IMR-90 (cell line): ENCODE measurements at regions of chr3 and their contacts with region 1.

Region 1: GRCh38 chr3:168847291-168847883 is 751.7 kb upstream of the GOLIM4 start:
- DNase-seq: peak; percentile 57
- ATAC-seq: peak; percentile 81
- H3K4me3 ChIP-seq: no peak overlapping the region
- H3K27ac ChIP-seq: no peak overlapping the region
- H3K4me1 ChIP-seq: no peaks in the 10 kb centered on the region
- H3K27me3 ChIP-seq: peaks cover 12% of the 10 kb centered on the region
- CTCF ChIP-seq: peak; percentile 85
- POLR2A ChIP-seq: no peak
- RAD21 ChIP-seq: peak; percentile 90

Region 2: DNA sequence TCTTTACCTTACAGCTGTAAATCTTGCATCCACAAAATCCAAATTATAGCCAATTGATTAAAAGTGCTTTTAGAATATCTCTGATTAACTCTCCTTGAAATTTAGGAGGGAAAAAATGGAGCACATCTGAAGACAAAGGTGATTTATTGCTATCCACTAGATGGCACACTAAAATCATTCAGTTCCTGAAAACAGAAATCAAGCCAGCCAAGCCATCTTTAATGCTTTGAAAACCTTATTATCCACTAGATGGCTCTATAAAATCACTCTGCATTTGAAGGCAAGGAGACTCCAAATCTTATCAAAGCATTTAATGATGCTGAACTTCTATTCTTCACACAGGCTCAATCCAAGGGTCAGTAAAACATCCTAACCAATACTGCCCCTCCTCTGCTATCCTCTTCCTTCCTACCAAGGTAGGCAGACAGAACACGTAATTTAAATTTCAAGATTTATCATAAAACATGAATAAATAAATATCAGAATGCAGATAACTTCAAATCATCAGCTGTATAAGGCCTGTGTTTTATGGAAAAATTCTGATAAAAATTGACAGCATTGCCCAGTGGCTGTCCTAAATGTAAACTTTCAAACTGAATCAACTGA is 800.1 kb before region 1 on chr3:
- CTCF ChIA-PET with region 1: no interaction called
- POLR2A ChIA-PET with region 1: no interaction called
- dilution Hi-C with region 1: no loop called
- in situ Hi-C with region 1: no loop called
- intact Hi-C with region 1: loop called (anchors 5 kb)
- DNase-seq: peak; percentile 87
- ATAC-seq: peak; percentile 73
- H3K4me3 ChIP-seq: no peak overlapping the region
- H3K27ac ChIP-seq: no peak overlapping the region
- H3K4me1 ChIP-seq: peaks cover 13% of the 10 kb centered on the region
- H3K27me3 ChIP-seq: no peaks in the 10 kb centered on the region
- CTCF ChIP-seq: peak; percentile 99
- POLR2A ChIP-seq: peak; percentile 47; the same call in 1 of the 2 replicates
- RAD21 ChIP-seq: peak; percentile 94

Region 3: DNA sequence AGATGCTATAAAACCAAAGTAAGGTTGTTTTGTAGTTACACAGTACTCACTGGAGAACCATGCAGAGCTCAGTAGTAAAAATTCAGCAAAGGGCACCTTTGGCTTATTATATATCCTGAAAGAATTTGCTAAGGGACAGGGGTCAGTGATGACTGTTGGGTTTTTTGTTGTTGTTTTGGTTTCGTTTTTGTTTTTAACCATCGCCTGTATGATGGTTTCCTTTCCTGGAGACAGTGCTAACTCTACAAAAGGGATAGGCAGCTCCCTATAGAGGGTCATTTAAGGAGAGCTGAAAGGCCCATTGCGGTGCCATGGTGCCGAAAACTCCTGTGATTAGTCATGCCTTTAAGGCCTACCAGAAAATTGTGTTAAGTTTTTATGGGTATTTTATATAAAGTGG is 633.5 kb before region 1 on chr3:
- CTCF ChIA-PET with region 1: interaction called, 30 read pairs
- POLR2A ChIA-PET with region 1: no interaction called
- dilution Hi-C with region 1: no loop called
- in situ Hi-C with region 1: loop called (anchors 5 kb)
- intact Hi-C with region 1: loop called (anchors 1 kb)
- DNase-seq: no peak
- ATAC-seq: no peak
- H3K4me3 ChIP-seq: no peak overlapping the region
- H3K27ac ChIP-seq: no peak overlapping the region
- H3K4me1 ChIP-seq: no peaks in the 10 kb centered on the region
- H3K27me3 ChIP-seq: no peaks in the 10 kb centered on the region
- CTCF ChIP-seq: no peak
- POLR2A ChIP-seq: no peak
- RAD21 ChIP-seq: no peak

Region 4: GRCh38 chr3:168467115-168467714 is 380.2 kb before region 1 on chr3:
- CTCF ChIA-PET with region 1: interaction called, 10 read pairs
- POLR2A ChIA-PET with region 1: no interaction called
- dilution Hi-C with region 1: no loop called
- in situ Hi-C with region 1: no loop called
- intact Hi-C with region 1: loop called (anchors 1 kb)
- DNase-seq: peak; percentile 55
- ATAC-seq: peak; percentile 90
- H3K4me3 ChIP-seq: no peak overlapping the region
- H3K27ac ChIP-seq: no peak overlapping the region
- H3K4me1 ChIP-seq: no peaks in the 10 kb centered on the region
- H3K27me3 ChIP-seq: no peaks in the 10 kb centered on the region
- CTCF ChIP-seq: peak; percentile 60
- POLR2A ChIP-seq: no peak
- RAD21 ChIP-seq: peak; percentile 73

Region 5: DNA sequence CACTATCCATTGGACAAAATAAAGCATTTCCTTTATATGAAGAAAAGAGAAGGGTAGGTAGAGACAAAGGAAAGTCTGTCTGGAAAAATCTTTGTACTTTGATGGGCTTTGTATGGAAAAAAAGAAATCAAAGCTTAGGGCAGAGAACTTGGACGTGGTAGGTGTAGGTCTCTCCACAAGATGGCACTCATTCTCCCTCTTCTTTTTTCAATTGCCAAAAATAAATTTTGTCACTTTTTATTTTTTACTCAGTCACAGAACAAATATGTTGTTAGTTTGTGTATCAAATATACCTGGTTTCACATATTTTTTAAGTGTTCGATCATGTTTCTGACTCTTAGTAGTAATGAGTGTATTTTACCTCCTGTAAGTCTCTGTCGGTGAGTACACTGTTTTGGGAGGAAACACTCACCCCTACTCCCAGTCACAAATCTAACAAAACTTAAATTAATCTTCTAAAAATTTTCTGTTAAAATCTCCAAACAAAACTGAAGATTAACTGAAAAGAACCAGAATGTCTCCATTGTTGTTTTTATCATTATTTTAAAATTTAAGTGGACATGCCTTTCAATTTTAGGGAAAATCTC is 335.9 kb before region 1 on chr3:
- CTCF ChIA-PET with region 1: interaction called, 16 read pairs
- POLR2A ChIA-PET with region 1: no interaction called
- dilution Hi-C with region 1: no loop called
- in situ Hi-C with region 1: loop called (anchors 5 kb)
- intact Hi-C with region 1: loop called (anchors 1 kb)
- DNase-seq: peak; percentile 20
- ATAC-seq: peak; percentile 40; the same call in 1 of the 2 replicates
- H3K4me3 ChIP-seq: no peak overlapping the region
- H3K27ac ChIP-seq: no peak overlapping the region
- H3K4me1 ChIP-seq: no peaks in the 10 kb centered on the region
- H3K27me3 ChIP-seq: no peaks in the 10 kb centered on the region
- CTCF ChIP-seq: peak; percentile 66
- POLR2A ChIP-seq: no peak
- RAD21 ChIP-seq: peak; percentile 57

Region 6: GRCh38 chr3:168620826-168621225 is 226.6 kb before region 1 on chr3:
- CTCF ChIA-PET with region 1: interaction called, 3 read pairs
- POLR2A ChIA-PET with region 1: no interaction called
- dilution Hi-C with region 1: no loop called
- in situ Hi-C with region 1: no loop called
- intact Hi-C with region 1: loop called (anchors 5 kb)
- DNase-seq: no peak
- ATAC-seq: peak; percentile 72; the same call in 1 of the 2 replicates
- H3K4me3 ChIP-seq: no peak overlapping the region
- H3K27ac ChIP-seq: no peak overlapping the region
- H3K4me1 ChIP-seq: no peaks in the 10 kb centered on the region
- H3K27me3 ChIP-seq: no peaks in the 10 kb centered on the region
- CTCF ChIP-seq: peak; percentile 43
- POLR2A ChIP-seq: no peak
- RAD21 ChIP-seq: peak; percentile 41; the same call in 1 of the 2 replicates

Region 7: DNA sequence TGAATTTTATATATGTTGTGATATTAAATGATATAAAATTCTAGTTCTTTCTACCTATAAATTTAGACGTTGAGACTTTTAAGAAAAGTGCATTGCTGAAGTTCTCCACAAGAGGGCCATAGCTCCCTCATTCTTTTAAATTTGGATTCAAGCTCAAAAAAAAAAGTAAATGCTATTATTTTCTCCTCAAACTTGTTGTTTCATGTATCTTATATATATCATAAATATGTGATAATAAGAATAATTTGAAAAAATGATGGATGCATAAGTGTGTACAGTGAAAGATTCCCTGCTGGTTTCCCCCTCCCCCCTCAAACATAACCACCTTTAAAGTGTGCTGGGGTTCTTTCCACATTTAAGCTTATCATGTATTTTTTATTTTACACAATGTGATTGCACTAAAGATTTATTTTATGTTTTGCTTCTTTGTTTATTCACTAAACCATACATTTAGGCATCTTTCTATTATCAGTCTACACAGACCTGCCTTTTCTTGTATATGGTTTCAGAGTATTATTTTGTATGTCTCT is 17.7 kb after region 1 on chr3:
- CTCF ChIA-PET with region 1: interaction called, 13 read pairs
- POLR2A ChIA-PET with region 1: no interaction called
- dilution Hi-C with region 1: no loop called
- in situ Hi-C with region 1: no loop called
- intact Hi-C with region 1: no loop called
- DNase-seq: peak; percentile 48
- ATAC-seq: peak; percentile 44; the same call in 1 of the 2 replicates
- H3K4me3 ChIP-seq: no peak overlapping the region
- H3K27ac ChIP-seq: no peak overlapping the region
- H3K4me1 ChIP-seq: no peaks in the 10 kb centered on the region
- H3K27me3 ChIP-seq: no peaks in the 10 kb centered on the region
- CTCF ChIP-seq: peak; percentile 76
- POLR2A ChIP-seq: no peak
- RAD21 ChIP-seq: peak; percentile 66